ENCODE measurements at regions of chr2 and their contacts with region 1.

Region 1: GRCh38 chr2:149611099-149611820 is 23.7 kb upstream of the MMADHC start:
- DNase-seq: no peak
- H3K4me3 Mint-ChIP-seq: no peak overlapping the region
- H3K27ac Mint-ChIP-seq: peak overlapping the region; percentile 30
- H3K4me1 Mint-ChIP-seq: peaks cover 20% of the 10 kb centered on the region
- H3K27me3 Mint-ChIP-seq: no peaks in the 10 kb centered on the region
- CTCF ChIP-seq: no peak

Region 2: GRCh38 chr2:149715005-149715592 is 103.8 kb after region 1 on chr2:
- CTCF ChIA-PET with region 1: interaction called, 5 read pairs
- POLR2A ChIA-PET with region 1: no interaction called
- intact Hi-C with region 1: loop called (anchors 1 kb)
- DNase-seq: peak; percentile 63
- H3K4me3 Mint-ChIP-seq: no peak overlapping the region
- H3K27ac Mint-ChIP-seq: no peak overlapping the region
- H3K4me1 Mint-ChIP-seq: no peaks in the 10 kb centered on the region
- H3K27me3 Mint-ChIP-seq: no peaks in the 10 kb centered on the region
- CTCF ChIP-seq: peak; percentile 67

Region 3: GRCh38 chr2:150147889-150148683 is 536.8 kb after region 1 on chr2:
- CTCF ChIA-PET with region 1: no interaction called
- POLR2A ChIA-PET with region 1: no interaction called
- intact Hi-C with region 1: no loop called
- DNase-seq: no peak
- H3K4me3 Mint-ChIP-seq: no peak overlapping the region
- H3K27ac Mint-ChIP-seq: no peak overlapping the region
- H3K4me1 Mint-ChIP-seq: peaks cover under 1% of the 10 kb centered on the region
- H3K27me3 Mint-ChIP-seq: no peaks in the 10 kb centered on the region
- CTCF ChIP-seq: no peak